ENCODE measurements at regions of chr3 and their contacts with region 1.

Region 1: GRCh38 chr3:15629860-15630597 is 28.5 kb downstream of the BTD start:
- DNase-seq: peak; percentile 84
- H3K4me3 Mint-ChIP-seq: peak overlapping the region; percentile 37
- H3K27ac Mint-ChIP-seq: peak overlapping the region; percentile 28
- H3K4me1 Mint-ChIP-seq: peaks cover 46% of the 10 kb centered on the region
- H3K27me3 Mint-ChIP-seq: no peaks in the 10 kb centered on the region

Region 2: GRCh38 chr3:15585111-15585845 is 44.8 kb before region 1 on chr3:
- CTCF ChIA-PET with region 1: no interaction called
- intact Hi-C with region 1: no loop called
- DNase-seq: no peak
- H3K4me3 Mint-ChIP-seq: no peak overlapping the region
- H3K27ac Mint-ChIP-seq: no peak overlapping the region
- H3K4me1 Mint-ChIP-seq: no peaks in the 10 kb centered on the region
- H3K27me3 Mint-ChIP-seq: no peaks in the 10 kb centered on the region

Region 3: GRCh38 chr3:15694628-15695027 is 64.6 kb after region 1 on chr3:
- CTCF ChIA-PET with region 1: interaction called, 3 read pairs
- intact Hi-C with region 1: loop called (anchors 2 kb)
- DNase-seq: no peak
- H3K4me3 Mint-ChIP-seq: no peak overlapping the region
- H3K27ac Mint-ChIP-seq: no peak overlapping the region
- H3K4me1 Mint-ChIP-seq: peaks cover 2% of the 10 kb centered on the region
- H3K27me3 Mint-ChIP-seq: no peaks in the 10 kb centered on the region

Region 4: DNA sequence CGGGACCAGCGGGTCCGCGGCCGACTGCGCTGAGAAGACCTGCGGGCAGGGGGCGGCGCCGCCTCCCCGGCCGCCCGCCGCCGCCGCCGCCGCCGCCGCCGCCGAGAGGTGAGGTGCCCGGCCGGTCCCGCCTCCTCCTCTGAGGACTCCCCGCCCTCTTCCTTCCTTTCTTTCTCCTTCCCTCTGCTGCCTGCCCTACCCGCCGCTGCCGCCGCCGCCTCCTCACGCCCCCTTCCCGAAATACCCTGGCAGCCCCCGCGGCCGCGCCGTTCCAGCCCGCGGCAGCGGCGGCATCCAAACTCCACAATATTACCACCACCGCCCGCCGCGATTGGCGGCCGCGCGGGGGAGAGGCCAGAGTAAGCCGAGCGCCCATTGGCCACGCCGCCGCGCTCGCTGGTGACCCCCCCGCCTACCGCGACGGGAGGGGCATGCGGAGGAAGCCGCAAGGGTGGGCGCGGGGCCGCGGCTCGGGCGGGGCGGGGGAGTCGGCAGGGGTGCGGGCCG is 229.5 kb after region 1 on chr3:
- CTCF ChIA-PET with region 1: no interaction called
- intact Hi-C with region 1: loop called (anchors 1 kb)
- DNase-seq: peak; percentile 75
- H3K4me3 Mint-ChIP-seq: peak overlapping the region; percentile 98
- H3K27ac Mint-ChIP-seq: peak overlapping the region; percentile 91
- H3K4me1 Mint-ChIP-seq: peaks cover 40% of the 10 kb centered on the region
- H3K27me3 Mint-ChIP-seq: no peaks in the 10 kb centered on the region

Region 5: DNA sequence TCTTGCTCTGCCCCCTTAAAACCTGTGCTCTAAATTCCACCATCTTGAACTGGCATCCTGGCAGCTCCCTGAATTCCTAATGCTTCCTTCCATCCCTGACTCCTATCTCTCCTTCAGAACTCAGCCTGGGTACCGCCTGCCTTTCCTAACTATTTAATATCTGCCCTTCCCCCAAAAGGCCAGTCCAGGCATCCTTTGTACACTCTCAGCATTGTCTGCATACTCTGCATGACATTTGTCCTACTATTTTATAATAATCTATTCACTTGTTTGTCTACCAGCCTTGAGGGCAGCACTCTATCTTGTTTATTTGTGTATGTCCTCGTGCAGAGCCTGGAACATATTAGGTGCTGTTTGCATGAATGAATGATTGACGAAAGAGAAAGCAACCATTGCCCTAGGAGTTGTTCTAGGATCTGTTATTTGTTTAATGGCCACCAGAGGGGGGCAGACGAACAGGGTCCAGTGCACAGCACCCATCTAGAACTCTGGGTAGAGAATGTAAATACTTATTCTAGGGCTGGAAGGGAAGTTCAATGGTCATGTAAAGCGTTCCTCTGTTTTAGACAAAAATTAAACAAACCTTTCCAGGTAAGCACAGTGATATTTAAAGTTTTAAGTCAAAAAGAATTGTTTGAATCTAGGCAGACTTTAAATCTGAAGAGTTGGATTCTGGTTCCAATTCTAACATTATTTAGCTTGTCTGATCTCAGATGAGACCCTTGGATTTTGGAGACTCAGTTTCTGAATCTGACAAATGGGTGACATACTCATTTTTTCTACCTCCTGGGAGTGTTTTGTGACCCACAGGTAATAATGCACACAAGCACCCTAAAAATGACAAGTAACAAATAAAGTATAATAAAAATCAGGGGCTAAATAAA is 418.6 kb after region 1 on chr3:
- CTCF ChIA-PET with region 1: interaction called, 4 read pairs
- intact Hi-C with region 1: loop called (anchors 1 kb)
- DNase-seq: peak; percentile 68
- H3K4me3 Mint-ChIP-seq: no peak overlapping the region
- H3K27ac Mint-ChIP-seq: no peak overlapping the region
- H3K4me1 Mint-ChIP-seq: peaks cover 10% of the 10 kb centered on the region
- H3K27me3 Mint-ChIP-seq: no peaks in the 10 kb centered on the region

Region 6: DNA sequence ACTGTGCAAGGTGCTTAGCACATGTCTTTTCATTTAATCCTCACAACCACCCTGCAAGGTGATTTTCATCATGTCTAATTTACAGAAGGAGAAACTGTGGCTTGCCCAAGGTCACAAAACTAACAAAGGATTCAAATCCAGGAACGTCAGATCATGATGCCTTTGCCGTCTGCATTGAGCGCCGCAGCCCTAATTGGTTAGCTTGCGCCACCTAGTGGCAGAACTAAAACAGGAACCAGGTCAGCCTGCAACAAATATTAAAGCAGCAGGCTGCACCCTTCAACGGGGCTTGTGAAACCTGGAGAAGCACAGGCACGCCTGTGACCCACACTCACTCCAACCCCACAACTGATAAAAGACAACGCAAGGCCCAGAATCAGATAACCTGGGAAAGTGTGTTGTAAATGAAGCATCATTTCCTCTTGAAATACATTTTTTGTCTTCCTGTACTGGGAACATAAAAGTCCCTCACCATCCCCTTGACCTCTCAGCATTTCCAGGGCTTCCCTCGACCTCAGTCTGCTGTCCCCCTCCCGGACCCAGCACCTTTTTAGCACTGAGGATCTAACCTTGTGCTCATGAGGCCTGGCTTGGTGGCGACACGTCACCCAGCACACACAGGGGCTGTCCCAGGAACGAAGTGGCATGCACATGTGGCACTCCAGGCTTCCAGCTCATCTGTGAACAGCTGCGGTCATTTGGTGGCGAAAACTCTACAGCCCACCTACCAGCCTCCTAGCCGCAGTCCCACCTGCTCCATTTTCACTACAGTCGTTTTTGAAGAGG is 617.4 kb after region 1 on chr3:
- CTCF ChIA-PET with region 1: no interaction called
- intact Hi-C with region 1: loop called (anchors 1 kb)
- DNase-seq: peak; percentile 89
- H3K4me3 Mint-ChIP-seq: no peak overlapping the region
- H3K27ac Mint-ChIP-seq: no peak overlapping the region
- H3K4me1 Mint-ChIP-seq: peaks cover 4% of the 10 kb centered on the region
- H3K27me3 Mint-ChIP-seq: no peaks in the 10 kb centered on the region